Psoas muscle (tissue), 8 donors: ENCODE measurements at regions of chr14 and their contacts with region 1.

Region 1: DNA sequence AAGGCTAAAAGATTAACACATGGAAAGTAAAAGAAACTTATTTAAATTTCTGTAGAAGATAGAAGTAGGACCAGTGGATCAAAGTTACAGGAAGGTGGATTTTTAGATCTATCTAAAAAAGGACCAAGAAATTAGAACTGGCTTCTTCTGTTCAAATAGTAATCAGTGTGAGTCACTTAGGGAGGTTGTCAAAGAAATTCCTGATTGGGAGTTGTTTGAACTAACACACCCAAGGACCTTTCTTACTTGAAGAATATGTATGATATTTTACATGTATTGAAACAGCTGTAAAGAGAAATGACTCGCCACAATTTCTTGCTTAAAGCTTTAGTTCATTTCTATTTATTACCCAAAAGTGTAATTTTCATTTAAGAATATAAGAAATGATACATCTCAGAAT is 256.9 kb downstream of the RAD51B start:
- DNase-seq: no peak
- ATAC-seq: no peak
- H3K4me3 ChIP-seq: no peak overlapping the region
- H3K27ac ChIP-seq: no peak overlapping the region
- H3K4me1 ChIP-seq: no peaks in the 10 kb centered on the region
- H3K27me3 ChIP-seq: no peaks in the 10 kb centered on the region
- CTCF ChIP-seq: no peak

Region 2: DNA sequence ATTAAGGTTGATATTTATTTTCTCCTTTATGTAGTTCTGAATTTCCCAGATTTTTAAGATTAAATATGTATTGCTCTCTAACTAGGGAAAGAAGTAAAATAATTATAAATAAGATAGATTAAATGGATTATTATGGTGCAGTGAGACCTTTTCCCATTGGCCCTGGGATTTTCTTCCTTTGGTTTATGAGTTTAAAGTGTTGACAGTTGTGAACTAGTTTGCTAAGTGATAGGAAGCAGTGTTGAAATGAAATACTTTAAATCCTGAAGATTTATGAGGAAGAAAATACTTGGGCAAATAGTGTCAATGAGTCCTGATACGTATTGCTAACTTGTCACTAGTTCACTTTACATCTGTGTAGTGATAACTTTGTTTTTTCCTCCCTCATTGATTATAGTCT is 68.0 kb before region 1 on chr14:
- intact Hi-C with region 1: loop called in 1 of 2 experiments (anchors 2 kb)
- DNase-seq: no peak
- ATAC-seq: no peak
- H3K4me3 ChIP-seq: no peak overlapping the region
- H3K27ac ChIP-seq: no peak overlapping the region
- H3K4me1 ChIP-seq: peaks cover 6% of the 10 kb centered on the region
- H3K27me3 ChIP-seq: no peaks in the 10 kb centered on the region
- CTCF ChIP-seq: no peak

Region 3: DNA sequence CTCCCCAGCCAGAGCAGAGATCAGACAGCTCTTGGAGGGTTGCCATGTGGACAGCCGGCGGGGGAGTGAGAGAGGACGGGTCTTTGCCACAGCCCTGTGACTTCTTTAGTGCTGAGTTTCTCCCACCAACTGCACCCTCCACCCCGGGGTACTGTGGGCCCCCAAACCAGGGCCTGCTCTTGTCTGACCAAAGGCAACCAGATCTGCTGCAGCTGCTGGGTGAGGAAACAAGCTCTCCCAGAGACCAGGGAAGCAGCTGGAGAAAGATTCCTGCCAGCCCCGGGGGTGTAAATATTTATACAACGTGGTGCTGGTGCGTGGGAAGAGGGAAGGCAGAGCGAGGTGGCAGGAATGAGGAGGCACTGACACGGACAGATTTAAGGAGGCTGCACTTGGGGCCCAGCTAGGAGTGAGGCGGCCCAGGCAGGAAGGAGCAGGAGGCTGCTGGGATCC is 730.7 kb after region 1 on chr14:
- intact Hi-C with region 1: loop called in 1 of 2 experiments (anchors 5 kb)
- DNase-seq: peak; percentile 56 to 68
- ATAC-seq: peak; percentile 48 to 62 (median 56)
- H3K4me3 ChIP-seq: no peak overlapping the region
- H3K27ac ChIP-seq: peak overlapping the region; percentile 60
- H3K4me1 ChIP-seq: peaks cover 18% of the 10 kb centered on the region
- H3K27me3 ChIP-seq: no peaks in the 10 kb centered on the region
- CTCF ChIP-seq: no peak